Colonic mucosa (tissue), 4 donors: ENCODE measurements at regions of chr9 and their contacts with region 1.

Region 1: DNA sequence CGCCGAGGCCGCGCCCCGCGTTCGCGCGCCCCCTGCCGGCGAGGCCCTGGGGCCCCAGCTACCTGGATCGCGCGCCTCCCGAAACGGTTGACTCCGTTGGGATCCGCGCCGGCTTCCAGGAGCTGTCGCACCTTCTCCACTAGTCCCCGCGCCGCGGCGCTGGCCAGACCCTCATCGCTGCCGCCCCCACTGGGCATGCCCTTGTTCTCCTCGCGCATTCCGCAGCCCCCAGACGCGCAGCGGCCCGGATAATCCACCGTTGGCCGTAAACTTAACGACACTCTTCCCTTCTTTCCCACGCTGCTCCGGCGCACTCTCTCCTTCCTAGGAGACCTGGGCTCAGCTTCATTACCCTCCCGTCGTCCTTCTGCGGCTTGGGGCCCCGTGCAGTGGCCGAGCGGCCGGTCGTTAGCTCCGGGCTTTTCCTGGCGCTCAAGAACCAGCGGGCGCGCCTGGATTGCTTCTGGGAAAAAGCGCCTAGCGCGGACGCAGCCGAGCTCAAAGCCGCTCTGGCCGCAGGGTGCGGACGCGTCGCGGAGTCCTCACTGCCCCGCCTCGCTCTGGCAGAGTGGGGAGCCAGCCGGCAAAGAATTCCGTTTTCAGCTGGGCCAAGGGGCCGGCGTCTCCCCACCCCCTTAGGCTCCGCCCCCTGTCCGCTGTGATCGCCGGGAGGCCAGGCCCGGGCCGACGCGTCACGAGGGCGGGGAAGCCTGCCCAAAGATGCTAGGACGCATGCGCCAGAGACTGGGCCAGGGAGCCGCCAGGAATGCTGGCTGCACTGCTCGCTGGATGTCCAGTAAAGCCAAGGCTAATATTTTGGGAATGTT is at the start of gene CDKN2B:
- DNase-seq: peak; percentile 98
- H3K4me3 ChIP-seq: peak within 1 kb of the TSS; percentile 57
- H3K27ac ChIP-seq: peak within 1 kb of the TSS; percentile 88
- H3K4me1 ChIP-seq: no peaks in the 10 kb centered on the region
- H3K27me3 ChIP-seq: peaks cover 18% of the 10 kb centered on the region
- CTCF ChIP-seq: peak; percentile 98
- total RNA-seq, gene CDKN2B: 57.0 to 76.6 TPM

Region 2: GRCh38 chr9:21728781-21729180 is 280.2 kb before region 1 on chr9:
- intact Hi-C with region 1: no loop called
- DNase-seq: no peak
- H3K4me3 ChIP-seq: no peak overlapping the region
- H3K27ac ChIP-seq: no peak overlapping the region
- H3K4me1 ChIP-seq: no peaks in the 10 kb centered on the region
- H3K27me3 ChIP-seq: no peaks in the 10 kb centered on the region
- CTCF ChIP-seq: no peak

Region 3: GRCh38 chr9:21965401-21965951 is 43.5 kb before region 1 on chr9:
- intact Hi-C with region 1: loop called (anchors 5 kb)
- DNase-seq: peak; percentile 64
- H3K4me3 ChIP-seq: peak overlapping the region; percentile 21
- H3K27ac ChIP-seq: no peak overlapping the region
- H3K4me1 ChIP-seq: no peaks in the 10 kb centered on the region
- H3K27me3 ChIP-seq: peaks cover 73% of the 10 kb centered on the region
- CTCF ChIP-seq: peak; percentile 23